PC-3 (cell line): ENCODE measurements at regions of chr1 and their contacts with region 1.

Region 1: GRCh38 chr1:70410604-70411359 is at the start of gene CTH:
- DNase-seq: peak; percentile 98
- ATAC-seq: peak; percentile 95
- H3K4me3 ChIP-seq: peak within 1 kb of the TSS; percentile 88
- H3K27ac ChIP-seq: peak within 1 kb of the TSS; percentile 73
- H3K4me1 ChIP-seq: peaks cover 11% of the 10 kb centered on the region; the same call in 1 of the 2 replicates
- H3K27me3 ChIP-seq: no peaks in the 10 kb centered on the region
- CTCF ChIP-seq: no peak
- total RNA-seq, gene CTH: 8.5 and 13.2 TPM in 2 replicates

Region 2: DNA sequence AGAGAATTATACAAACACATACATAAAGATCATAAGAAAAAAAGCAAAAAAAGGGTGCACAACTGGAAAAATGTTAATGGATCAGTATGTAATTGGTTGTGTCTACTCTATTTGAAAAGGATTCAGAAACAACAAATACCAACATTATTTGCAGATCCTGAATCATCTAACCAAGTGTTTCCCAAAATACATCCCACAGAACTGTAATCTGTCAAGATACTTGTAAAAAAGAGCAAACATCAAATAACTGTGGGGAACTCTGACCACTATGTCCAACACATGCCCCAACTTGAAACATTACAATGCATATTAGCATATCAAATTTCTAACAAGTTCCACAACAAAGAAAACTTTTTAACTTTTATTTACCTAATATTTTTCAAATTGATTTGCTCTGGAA is 78.8 kb before region 1 on chr1:
- CTCF ChIA-PET with region 1: no interaction called
- POLR2A ChIA-PET with region 1: no interaction called
- intact Hi-C with region 1: loop called (anchors 2 kb)
- DNase-seq: peak; percentile 76
- ATAC-seq: peak; percentile 89
- H3K4me3 ChIP-seq: no peak overlapping the region
- H3K27ac ChIP-seq: peak overlapping the region; percentile 48
- H3K4me1 ChIP-seq: peaks cover 50% of the 10 kb centered on the region
- H3K27me3 ChIP-seq: no peaks in the 10 kb centered on the region
- CTCF ChIP-seq: no peak

Region 3: DNA sequence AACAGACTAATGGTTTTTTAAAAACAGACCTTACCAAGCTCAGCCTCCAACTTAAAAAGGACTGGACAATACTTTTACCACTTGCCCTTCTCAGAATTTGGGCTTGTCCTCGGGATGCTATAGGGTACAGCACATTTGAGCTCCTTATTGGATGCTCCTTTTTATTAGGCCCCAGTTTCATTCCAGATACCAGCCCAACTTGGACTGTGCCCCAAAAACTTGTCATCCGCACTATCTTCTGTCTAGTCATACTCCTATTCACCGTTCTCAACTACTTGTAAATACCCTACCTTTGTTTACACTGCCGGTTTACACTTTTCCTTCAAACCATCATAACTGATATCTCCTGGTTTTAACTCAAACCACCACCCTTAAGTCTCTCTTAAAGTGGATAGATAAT is 38.4 kb before region 1 on chr1:
- CTCF ChIA-PET with region 1: no interaction called
- POLR2A ChIA-PET with region 1: interaction called, 4 read pairs
- intact Hi-C with region 1: loop called (anchors 1 kb)
- DNase-seq: peak; percentile 81
- ATAC-seq: peak; percentile 78
- H3K4me3 ChIP-seq: peak overlapping the region; percentile 27; the same call in 1 of the 2 replicates
- H3K27ac ChIP-seq: peak overlapping the region; percentile 99
- H3K4me1 ChIP-seq: peaks cover 50% of the 10 kb centered on the region
- H3K27me3 ChIP-seq: no peaks in the 10 kb centered on the region
- CTCF ChIP-seq: no peak

Region 4: GRCh38 chr1:70571191-70571590 is 160.4 kb after region 1 on chr1:
- CTCF ChIA-PET with region 1: no interaction called
- POLR2A ChIA-PET with region 1: no interaction called
- intact Hi-C with region 1: no loop called
- DNase-seq: no peak
- ATAC-seq: no peak
- H3K4me3 ChIP-seq: no peak overlapping the region
- H3K27ac ChIP-seq: no peak overlapping the region
- H3K4me1 ChIP-seq: no peaks in the 10 kb centered on the region
- H3K27me3 ChIP-seq: peaks cover 37% of the 10 kb centered on the region
- CTCF ChIP-seq: no peak